Heart right ventricle (tissue), 16 donors: ENCODE measurements at regions of chr22 and their contacts with region 1.

Region 1: DNA sequence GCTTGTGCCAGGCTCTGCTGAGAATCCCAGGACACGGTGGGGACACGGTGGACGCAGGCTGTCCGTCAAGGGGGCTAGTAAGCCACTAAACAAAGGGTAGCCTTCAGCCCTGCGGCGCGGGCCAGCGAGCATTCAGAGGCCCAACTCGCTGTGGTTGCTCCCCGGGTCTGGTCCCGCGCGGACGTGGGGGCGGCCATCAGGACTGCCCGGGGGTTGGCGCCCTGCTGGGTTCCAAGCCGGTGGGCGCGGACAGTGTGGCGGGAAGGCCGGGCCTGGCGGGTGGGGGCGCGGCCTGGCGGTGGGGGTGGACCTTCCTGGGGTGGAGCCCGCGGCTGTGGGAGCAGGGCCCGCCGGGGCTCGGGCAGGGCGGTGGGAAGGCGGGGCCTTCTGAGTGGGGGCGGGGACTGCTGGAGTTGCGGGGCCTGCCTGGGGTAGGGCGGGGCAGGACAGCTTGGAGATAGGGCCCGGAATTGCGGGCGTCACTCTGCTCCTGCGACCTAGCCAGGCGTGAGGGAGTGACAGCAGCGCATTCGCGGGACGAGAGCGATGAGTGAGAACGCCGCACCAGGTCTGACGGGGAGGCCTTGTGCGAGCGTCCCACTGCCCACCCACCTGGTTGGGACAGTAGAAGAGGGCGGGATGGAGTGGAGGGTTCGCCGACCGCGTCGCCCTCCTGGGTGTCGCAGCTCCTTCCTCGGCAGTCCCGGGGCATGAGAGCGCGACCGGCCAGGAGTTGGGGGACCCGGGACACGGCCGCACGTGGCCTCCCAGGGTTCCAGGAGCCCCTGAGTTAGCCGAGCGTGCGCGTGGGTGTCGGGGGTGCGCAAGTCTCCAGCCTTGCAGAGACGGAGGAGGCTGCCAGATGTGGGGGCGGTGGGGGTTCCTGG is at the start of gene SERHL2:
- DNase-seq: peak; percentile 95 to 98
- ATAC-seq: peak; percentile 91 to 98 (median 96)
- H3K4me3 ChIP-seq: peak within 1 kb of the TSS; percentile 4 to 82 (median 60)
- H3K27ac ChIP-seq: peak within 1 kb of the TSS in 9 of 10 donors; percentile 14 to 69 (median 53)
- H3K4me1 ChIP-seq: peaks cover 0 to 16% (median 11%) of the 10 kb centered on the region in 9 donors
- H3K27me3 ChIP-seq: no peaks in the 10 kb centered on the region
- CTCF ChIP-seq: peak in 1 of 9 donors; percentile 7
- total RNA-seq, gene SERHL2: 1.7 to 6.1 (median 3.5) TPM

Region 2: GRCh38 chr22:42070517-42071422 is 482.9 kb before region 1 on chr22 and contains the start of gene NAGA:
- intact Hi-C with region 1: loop called in 1 of 10 experiments (anchors 5 kb)
- DNase-seq: peak; percentile 95 to 97
- ATAC-seq: peak; percentile 94 to 98 (median 97)
- H3K4me3 ChIP-seq: peak within 1 kb of the TSS; percentile 38 to 87 (median 62)
- H3K27ac ChIP-seq: peak within 1 kb of the TSS; percentile 57 to 96 (median 86)
- H3K4me1 ChIP-seq: peaks cover 9 to 60% (median 35%) of the 10 kb centered on the region in 9 donors
- H3K27me3 ChIP-seq: no peaks in the 10 kb centered on the region
- CTCF ChIP-seq: no peak
- total RNA-seq, gene NAGA: 7.3 to 34.8 (median 12.3) TPM

Region 3: GRCh38 chr22:42511401-42511891 is 42.3 kb before region 1 on chr22:
- intact Hi-C with region 1: loop called in 3 of 10 experiments (anchors 5 kb)
- DNase-seq: no peak
- ATAC-seq: peak in 2 of 8 donors; percentile 3 to 4
- H3K4me3 ChIP-seq: no peak overlapping the region
- H3K27ac ChIP-seq: peak overlapping the region in 4 of 10 donors; percentile 21 to 82 (median 44)
- H3K4me1 ChIP-seq: peaks cover 2 to 29% (median 6%) of the 10 kb centered on the region in 9 donors
- H3K27me3 ChIP-seq: no peaks in the 10 kb centered on the region
- CTCF ChIP-seq: no peak